B cell (primary cell): ENCODE measurements at regions of chr15 and their contacts with region 1.

Region 1: DNA sequence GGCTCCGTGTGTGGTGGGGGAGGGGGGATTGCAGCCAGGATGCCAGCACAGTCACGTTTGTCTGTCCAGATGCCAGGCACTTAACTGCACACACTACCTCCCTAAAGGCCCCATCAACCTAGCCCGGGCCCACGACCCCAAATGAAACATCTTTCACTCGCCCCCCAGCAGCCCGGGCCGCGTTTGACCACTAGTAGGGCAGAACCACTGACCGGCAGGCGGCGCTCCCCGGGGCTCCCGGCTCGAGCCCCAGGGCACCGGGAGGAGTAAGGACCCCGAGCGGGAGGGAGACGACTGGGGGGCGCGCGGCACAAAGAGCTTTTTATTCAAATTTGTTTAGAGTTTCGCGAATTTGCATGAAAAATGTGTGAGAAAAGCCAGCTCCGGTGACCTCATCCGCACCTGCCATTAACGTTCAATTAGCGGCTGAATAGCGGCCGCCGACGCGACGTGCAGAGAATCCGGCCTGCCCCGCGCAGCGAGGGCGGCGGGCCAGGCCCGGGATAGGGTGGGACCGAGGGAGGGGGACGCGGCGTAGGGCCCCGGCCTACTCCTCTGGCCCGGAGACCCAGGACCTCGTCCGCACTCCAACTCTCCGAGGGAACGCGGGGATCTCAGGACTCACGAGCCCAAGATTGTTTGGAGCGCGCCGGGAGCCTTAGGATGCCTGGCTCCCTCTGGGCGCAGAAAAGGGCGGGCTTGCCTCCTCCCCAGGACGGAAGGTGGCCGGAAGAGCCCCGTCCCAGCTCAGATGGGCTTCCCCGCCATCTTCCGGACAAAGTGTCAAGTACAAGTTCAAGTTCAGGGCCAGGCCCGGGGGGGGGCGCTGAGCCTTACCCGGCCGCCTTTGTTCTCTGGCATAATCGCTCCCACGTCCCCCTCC is 64.9 kb upstream of the POLG start:
- DNase-seq: peak; percentile 67
- ATAC-seq: peak; percentile 65
- H3K4me3 ChIP-seq: peak overlapping the region in 4 of 5 experiments; percentile 52 to 64 (median 57)
- H3K4me3 Mint-ChIP-seq: peak overlapping the region; percentile 87
- H3K27ac ChIP-seq: no peak overlapping the region
- H3K27ac Mint-ChIP-seq: peak overlapping the region; percentile 71
- H3K4me1 ChIP-seq: peaks cover 25 to 35% of the 10 kb centered on the region in 2 donors
- H3K4me1 Mint-ChIP-seq: peaks cover 24% of the 10 kb centered on the region
- H3K27me3 ChIP-seq: peaks cover 3 to 76% (median 52%) of the 10 kb centered on the region in 4 experiments
- H3K27me3 Mint-ChIP-seq: peaks cover 68% of the 10 kb centered on the region
- CTCF ChIP-seq: peak; percentile 46

Region 2: DNA sequence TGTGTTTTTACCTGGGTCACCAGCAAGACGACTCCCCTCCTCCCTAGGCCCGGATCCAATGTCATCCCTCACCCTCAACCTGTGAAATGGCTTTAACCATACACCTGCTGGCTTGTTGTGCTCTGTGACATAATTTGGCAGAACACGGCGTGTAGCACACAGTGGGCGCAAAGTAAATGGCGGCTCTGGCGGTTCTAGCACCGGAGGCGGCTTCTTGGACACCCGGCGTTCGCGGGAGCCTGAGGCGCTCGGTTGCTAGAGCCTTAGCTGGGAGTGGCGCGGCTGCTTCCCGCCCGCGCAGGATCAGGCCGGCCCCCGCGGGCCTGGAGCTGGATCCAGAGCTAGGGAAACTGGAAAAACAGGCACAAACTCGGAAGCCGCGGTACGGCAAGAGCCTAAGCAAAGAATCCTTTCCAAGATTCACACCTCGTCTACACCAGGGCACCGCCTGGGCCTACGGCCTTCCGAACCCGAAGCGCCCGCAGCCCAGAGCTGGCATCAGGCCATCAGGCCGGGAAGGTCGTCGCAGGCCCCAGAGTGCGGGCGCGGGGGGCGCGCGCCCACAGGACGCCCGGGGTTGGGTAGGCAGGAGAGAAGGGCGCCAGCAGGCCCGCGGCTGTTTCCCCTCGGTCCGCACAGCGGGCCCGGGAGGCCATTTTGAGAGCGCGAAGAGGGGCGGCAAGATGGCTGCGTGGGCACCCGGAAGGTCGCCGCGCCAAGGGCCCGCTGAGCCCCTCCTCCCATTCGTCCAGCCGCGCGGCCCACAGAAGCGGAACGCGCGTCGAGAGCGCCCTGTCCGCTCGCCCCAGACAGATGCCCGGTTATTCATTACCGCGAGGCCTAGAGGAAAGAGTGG is 21.0 kb before region 1 on chr15:
- CTCF ChIA-PET with region 1: interaction called, 4 read pairs
- POLR2A ChIA-PET with region 1: no interaction called
- intact Hi-C with region 1: loop called (anchors 2 kb)
- DNase-seq: peak; percentile 64
- ATAC-seq: peak; percentile 65
- H3K4me3 ChIP-seq: peak overlapping the region; percentile 28 to 57 (median 51)
- H3K4me3 Mint-ChIP-seq: peak overlapping the region; percentile 81
- H3K27ac ChIP-seq: no peak overlapping the region
- H3K27ac Mint-ChIP-seq: peak overlapping the region; percentile 81
- H3K4me1 ChIP-seq: peaks cover 20 to 29% of the 10 kb centered on the region in 2 donors
- H3K4me1 Mint-ChIP-seq: peaks cover 14% of the 10 kb centered on the region
- H3K27me3 ChIP-seq: peaks cover 0 to 81% (median 66%) of the 10 kb centered on the region in 4 experiments
- H3K27me3 Mint-ChIP-seq: peaks cover 72% of the 10 kb centered on the region
- CTCF ChIP-seq: no peak